HEK293T (cell line): ENCODE measurements at regions of chr6 and their contacts with region 1.

Region 1: DNA sequence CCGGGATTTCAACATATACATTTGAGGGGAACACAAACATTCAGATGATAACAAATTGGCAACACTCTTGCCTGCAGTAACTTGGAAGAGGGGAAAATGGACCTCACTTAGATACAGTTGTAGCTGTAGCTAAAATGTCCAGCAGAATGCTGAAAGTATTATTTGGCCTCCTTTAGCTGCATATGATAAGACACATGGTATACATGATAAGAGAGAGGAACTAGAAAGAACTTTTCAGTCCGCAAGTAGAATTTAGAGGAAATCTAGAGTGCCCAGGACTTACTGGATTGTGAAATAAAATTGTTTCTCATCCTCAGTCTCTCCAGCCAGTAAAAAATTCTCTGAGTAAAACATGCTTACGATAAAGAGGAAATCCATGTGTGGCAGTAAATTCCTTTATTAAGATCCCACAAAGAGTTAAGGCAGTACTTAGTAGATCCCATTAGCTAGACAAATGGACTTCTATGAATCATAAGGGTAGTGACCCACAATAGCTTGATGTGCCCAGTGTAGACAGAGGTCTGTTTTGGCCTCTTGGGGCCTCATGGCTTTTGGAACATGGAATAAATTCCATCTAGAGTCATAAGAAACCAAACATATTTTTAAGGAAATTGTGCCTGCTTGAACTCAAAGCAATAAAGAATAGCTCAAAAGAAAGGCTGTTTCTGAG is 87.9 kb upstream of the RBM24 start:
- DNase-seq: no peak

Region 2: GRCh38 chr6:17057322-17057721 is 135.9 kb before region 1 on chr6:
- CTCF ChIA-PET with region 1: no interaction called
- POLR2A ChIA-PET with region 1: no interaction called
- DNase-seq: no peak

Region 3: GRCh38 chr6:17103715-17104114 is 89.5 kb before region 1 on chr6:
- CTCF ChIA-PET with region 1: no interaction called
- POLR2A ChIA-PET with region 1: no interaction called
- DNase-seq: no peak

Region 4: DNA sequence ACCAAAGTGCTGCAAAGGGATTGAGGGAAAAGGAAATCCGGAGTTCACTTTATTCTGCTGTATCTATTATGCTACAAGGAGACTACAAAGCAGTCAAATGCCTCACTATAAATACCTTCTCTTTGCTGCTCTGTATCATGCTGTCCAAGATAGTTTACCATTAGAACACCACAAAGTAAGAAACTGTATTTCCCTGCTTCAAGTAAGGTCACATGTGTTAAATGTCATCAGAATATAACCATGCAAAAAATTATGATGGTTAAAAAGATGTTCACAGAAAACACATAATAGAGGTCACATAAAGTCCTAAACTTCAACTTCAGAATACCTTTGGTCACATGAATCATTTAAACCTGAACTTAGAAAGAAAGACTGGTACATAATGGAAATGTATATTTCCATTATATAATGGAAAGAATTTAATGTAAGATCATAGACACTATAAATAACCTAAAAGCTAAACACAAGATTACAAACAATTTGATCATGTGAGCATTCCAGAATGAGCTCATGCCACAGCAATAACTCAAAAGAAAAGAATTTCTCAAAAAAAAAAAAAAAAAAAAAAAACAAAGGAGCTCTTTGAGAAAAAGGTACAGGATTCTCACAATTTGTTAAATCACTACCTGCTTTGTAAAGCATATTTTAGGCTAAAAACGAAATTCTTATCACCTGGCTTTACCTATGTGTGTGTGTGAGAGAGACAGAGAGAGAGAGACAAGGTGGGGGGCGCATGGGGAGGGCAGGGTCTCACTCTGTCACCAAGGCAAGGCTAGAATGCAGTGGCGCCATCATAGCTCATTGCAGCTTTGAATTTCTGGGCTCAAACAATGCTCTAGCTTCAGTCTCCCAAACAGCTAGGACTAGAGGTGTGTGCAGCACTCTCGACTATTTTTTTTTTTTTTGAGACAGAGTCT is 735.5 kb after region 1 on chr6:
- CTCF ChIA-PET with region 1: interaction called, 13 read pairs
- POLR2A ChIA-PET with region 1: no interaction called
- DNase-seq: no peak